ENCODE measurements at regions of chr3 and their contacts with region 1.

Region 1: DNA sequence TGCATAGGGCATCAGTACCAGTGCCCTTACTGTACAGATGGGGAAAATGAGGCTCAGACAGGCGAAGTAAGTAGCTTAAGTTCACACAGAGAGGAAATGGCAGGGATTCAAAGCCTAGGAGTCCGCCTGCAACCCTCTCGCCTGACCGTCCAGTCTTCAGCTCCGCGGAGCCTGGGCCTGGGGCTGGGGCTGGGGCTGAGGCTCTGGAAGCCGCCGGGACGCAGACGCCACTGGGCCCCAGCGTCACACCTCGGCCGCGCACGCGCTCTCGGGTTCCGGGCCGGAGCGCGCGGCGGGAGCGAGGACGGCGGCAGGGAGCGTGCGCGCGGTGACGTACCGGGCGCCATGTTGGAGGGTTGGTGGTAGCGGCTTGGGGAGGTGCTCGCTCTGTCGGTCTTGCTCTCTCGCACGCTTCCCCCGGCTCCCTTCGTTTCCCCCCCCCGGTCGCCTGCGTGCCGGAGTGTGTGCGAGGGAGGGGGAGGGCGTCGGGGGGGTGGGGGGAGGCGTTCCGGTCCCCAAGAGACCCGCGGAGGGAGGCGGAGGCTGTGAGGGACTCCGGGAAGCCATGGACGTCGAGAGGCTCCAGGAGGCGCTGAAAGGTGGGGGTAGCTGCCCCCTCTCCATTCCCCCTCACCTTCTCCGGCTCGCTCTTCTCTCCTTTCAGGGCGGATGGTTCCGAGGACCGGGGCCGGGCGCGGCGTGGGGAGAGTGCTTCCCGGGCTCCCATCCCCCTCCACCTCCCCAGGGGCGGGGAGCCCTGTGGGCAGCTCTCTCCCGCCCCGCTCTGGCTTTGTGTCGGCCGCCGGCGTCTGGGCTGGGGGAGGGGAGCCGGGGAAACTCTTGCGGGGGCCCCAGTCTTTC is at the start of gene PPP4R2:
- DNase-seq: peak; percentile 93
- ATAC-seq: peak; percentile 98
- total RNA-seq, gene PPP4R2: 48.1 to 65.3 TPM

Region 2: DNA sequence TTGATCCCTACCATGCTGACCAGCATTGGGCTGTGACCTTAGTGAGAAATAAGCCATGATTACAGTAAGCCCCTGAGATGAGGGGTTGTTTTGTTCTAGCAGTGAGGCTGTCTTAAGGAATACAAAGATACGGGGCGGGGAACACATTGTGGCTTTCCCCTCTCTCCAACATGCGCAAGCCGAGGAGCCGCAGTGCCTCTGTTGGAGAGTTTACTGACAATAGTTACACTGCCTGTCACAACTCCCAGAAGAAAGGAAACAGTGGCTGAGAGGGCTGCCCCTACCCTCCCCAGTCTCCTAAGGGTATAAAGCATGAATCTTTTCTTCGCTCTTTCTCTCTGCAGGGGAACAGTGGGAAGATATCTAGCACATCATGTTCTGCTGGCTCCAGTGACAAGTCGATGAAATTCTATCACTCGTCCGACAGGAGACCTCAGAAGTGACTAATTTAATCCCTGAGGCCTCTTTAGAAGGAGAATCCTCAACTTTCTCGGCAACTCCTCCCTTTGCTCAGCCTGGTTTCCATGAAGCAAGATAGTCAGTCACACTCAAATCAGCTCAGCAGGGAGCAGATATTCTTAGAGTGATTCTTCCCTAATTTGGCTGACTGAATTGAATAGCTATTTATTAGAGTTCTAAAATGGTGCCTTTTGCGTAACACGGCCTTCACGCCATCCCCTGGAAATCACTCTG is 802.8 kb before region 1 on chr3:
- intact Hi-C with region 1: no loop called
- DNase-seq: no peak
- ATAC-seq: no peak

Region 3: GRCh38 chr3:72375237-72376076 is 621.2 kb before region 1 on chr3:
- intact Hi-C with region 1: no loop called
- DNase-seq: no peak
- ATAC-seq: no peak

Region 4: DNA sequence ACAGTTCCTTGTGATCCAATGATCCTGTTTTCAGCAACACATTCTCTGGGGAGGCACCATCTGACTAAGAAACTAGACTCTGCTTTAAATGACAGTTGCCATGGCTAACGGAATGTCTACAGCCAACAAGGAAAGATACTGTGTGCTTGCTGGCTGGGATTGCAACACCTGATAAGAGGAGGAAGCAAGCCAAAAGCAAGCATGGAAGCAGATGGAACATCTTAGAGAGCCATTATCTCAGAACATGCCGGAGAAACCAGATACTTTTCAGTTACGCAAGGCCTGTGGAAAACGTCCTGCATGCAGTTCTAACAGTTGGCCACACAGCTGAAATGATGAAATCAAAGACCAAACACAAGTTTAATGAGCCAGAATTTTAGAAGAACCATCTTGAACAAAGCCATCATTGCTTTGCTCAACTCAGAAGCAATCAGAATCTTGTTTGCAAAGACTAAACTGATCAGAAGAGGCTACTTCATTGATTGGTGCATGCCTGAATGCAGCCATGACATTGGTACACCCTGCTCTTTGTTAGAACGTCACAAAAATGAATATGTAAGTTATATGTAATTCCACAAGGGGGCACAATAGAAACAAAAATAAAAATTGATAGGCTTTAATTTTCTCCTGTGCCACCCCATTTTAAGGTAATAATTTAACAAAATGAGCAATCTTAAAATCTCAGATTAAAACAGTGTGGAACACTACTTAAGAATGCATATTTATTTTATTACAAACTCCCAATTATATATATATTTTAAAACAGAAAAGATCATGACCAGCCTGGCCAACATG is 58.0 kb before region 1 on chr3:
- intact Hi-C with region 1: loop called in 1 of 2 experiments (anchors 5 kb)
- DNase-seq: peak; percentile 60
- ATAC-seq: peak; percentile 92 to 96

Region 5: GRCh38 chr3:72960812-72961518 is 35.7 kb before region 1 on chr3:
- intact Hi-C with region 1: loop called in 1 of 2 experiments (anchors 5 kb)
- DNase-seq: peak; percentile 60
- ATAC-seq: peak; percentile 84 to 89

Region 6: GRCh38 chr3:73056014-73056844 is 59.5 kb after region 1 on chr3:
- intact Hi-C with region 1: loop called in 1 of 2 experiments (anchors 10 kb)
- DNase-seq: no peak
- ATAC-seq: peak; percentile 34 to 48

Region 7: GRCh38 chr3:73353649-73354217 is 357.0 kb after region 1 on chr3:
- intact Hi-C with region 1: no loop called
- DNase-seq: no peak
- ATAC-seq: no peak

Measured in left cardiac atrium (tissue), 4 donors.